Activated CD4-positive, alpha-beta T cell treated with anti-CD3 and anti-CD28 coated beads, Interleukin-2, amount 10 ng/mL, durations not matched to agents 24 days and 14 days (primary cell): ENCODE measurements at regions of chr13 and their contacts with region 1.

Region 1: GRCh38 chr13:77329133-77329910 is 2.4 kb upstream of the MYCBP2 start:
- DNase-seq: peak; percentile 97
- H3K4me3 Mint-ChIP-seq: peak overlapping the region; percentile 87
- H3K27ac Mint-ChIP-seq: peak overlapping the region; percentile 99
- H3K4me1 Mint-ChIP-seq: peaks cover 33% of the 10 kb centered on the region
- H3K27me3 Mint-ChIP-seq: peaks cover 8% of the 10 kb centered on the region

Region 2: DNA sequence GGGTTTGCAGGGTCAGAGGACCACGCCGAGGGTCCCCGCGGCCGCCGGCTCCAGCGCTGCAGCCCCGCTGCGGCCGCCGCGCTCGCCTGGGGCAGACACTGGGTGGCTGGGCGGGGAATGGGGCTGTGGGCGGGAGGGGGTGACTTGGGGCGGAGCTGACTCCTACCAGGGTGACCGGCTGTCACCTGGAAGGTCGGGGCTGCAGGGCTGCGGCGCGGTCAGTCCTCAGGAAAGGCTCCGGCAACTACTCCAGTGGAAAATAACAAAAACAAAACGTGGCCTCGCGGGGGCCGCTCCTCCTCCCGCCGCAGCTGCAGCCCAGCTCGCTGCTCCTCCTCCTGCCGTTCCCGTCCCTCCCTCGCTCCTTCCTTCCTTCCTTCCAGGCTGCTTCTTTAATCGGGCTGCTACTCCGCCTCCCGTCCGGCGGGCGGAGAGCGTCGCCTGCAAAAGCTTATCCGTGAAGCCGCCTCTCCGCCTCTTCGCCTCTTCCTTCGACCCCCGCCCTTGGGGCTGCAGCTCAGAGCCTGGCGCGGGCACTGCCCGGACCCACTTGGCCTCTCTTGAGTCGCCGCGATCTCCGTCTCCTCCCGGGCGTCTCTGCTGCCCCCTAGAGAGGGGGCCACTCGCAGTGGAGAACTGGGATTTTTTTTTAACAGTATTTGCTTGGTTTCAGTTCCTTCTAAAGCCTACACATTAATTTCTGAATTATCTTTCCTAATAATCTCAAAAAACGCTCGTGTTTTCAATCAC is 1847.1 kb before region 1 on chr13 and contains the start of gene TBC1D4:
- intact Hi-C with region 1: loop called (anchors 5 kb)
- DNase-seq: peak; percentile 87
- H3K4me3 Mint-ChIP-seq: peak within 1 kb of the TSS; percentile 99
- H3K27ac Mint-ChIP-seq: peak within 1 kb of the TSS; percentile 86
- H3K4me1 Mint-ChIP-seq: peaks cover 36% of the 10 kb centered on the region
- H3K27me3 Mint-ChIP-seq: peaks cover 47% of the 10 kb centered on the region
- total RNA-seq, gene TBC1D4: 72.3 and 77.0 TPM in 2 replicates

Region 3: GRCh38 chr13:76991796-76992547 is 337.4 kb before region 1 on chr13 and contains the start of gene CLN5:
- intact Hi-C with region 1: loop called (anchors 1 kb)
- DNase-seq: peak; percentile 99
- H3K4me3 Mint-ChIP-seq: peak within 1 kb of the TSS; percentile 96
- H3K27ac Mint-ChIP-seq: peak within 1 kb of the TSS; percentile 95
- H3K4me1 Mint-ChIP-seq: peaks cover 26% of the 10 kb centered on the region
- H3K27me3 Mint-ChIP-seq: peaks cover 5% of the 10 kb centered on the region
- total RNA-seq, gene CLN5: 15.6 and 15.7 TPM in 2 replicates

Region 4: GRCh38 chr13:77184455-77184854 is 144.9 kb before region 1 on chr13:
- intact Hi-C with region 1: loop called (anchors 1 kb)
- DNase-seq: peak; percentile 70
- H3K4me3 Mint-ChIP-seq: peak overlapping the region; percentile 21
- H3K27ac Mint-ChIP-seq: peak overlapping the region; percentile 76
- H3K4me1 Mint-ChIP-seq: peaks cover 15% of the 10 kb centered on the region
- H3K27me3 Mint-ChIP-seq: no peaks in the 10 kb centered on the region

Region 5: GRCh38 chr13:77291774-77292173 is 37.5 kb before region 1 on chr13:
- intact Hi-C with region 1: loop called (anchors 1 kb)
- DNase-seq: no peak
- H3K4me3 Mint-ChIP-seq: no peak overlapping the region
- H3K27ac Mint-ChIP-seq: peak overlapping the region; percentile 26
- H3K4me1 Mint-ChIP-seq: peaks cover 32% of the 10 kb centered on the region
- H3K27me3 Mint-ChIP-seq: no peaks in the 10 kb centered on the region

Region 6: DNA sequence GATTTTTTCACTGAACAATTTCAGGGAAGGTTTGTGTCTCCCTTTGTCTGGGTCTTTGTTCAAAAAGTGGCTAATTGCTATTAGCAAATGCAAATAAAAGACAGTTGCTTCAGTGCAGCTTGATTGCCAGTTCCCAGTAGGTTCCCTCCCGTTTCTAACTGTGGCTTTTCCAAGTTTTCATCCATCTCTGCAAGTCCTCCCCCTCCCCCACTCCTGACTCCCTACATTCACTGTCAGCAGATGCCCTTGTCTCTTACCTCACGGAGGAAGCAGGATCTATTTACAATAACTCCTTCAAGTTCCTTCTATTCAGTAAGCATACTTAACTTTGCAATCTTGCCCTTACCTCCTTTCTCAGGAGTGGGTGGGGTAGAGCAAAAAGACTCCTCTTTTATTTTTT is 150.7 kb after region 1 on chr13:
- intact Hi-C with region 1: loop called (anchors 1 kb)
- DNase-seq: no peak
- H3K4me3 Mint-ChIP-seq: no peak overlapping the region
- H3K27ac Mint-ChIP-seq: no peak overlapping the region
- H3K4me1 Mint-ChIP-seq: peaks cover 15% of the 10 kb centered on the region
- H3K27me3 Mint-ChIP-seq: peaks cover 5% of the 10 kb centered on the region

Region 7: GRCh38 chr13:77737583-77738200 is 408.4 kb after region 1 on chr13:
- intact Hi-C with region 1: loop called (anchors 5 kb)
- DNase-seq: no peak
- H3K4me3 Mint-ChIP-seq: no peak overlapping the region
- H3K27ac Mint-ChIP-seq: no peak overlapping the region
- H3K4me1 Mint-ChIP-seq: peaks cover 4% of the 10 kb centered on the region
- H3K27me3 Mint-ChIP-seq: no peaks in the 10 kb centered on the region